ENCODE measurements at regions of chr2 and their contacts with region 1.

Region 1: GRCh38 chr2:109545828-109546713 is 67.7 kb downstream of the SEPTIN10 start:
- DNase-seq: peak; percentile 76
- ATAC-seq: peak; percentile 82
- H3K4me3 ChIP-seq: no peak overlapping the region
- H3K27ac ChIP-seq: no peak overlapping the region
- H3K4me1 ChIP-seq: no peaks in the 10 kb centered on the region
- H3K27me3 ChIP-seq: no peaks in the 10 kb centered on the region
- CTCF ChIP-seq: peak; percentile 92

Region 2: DNA sequence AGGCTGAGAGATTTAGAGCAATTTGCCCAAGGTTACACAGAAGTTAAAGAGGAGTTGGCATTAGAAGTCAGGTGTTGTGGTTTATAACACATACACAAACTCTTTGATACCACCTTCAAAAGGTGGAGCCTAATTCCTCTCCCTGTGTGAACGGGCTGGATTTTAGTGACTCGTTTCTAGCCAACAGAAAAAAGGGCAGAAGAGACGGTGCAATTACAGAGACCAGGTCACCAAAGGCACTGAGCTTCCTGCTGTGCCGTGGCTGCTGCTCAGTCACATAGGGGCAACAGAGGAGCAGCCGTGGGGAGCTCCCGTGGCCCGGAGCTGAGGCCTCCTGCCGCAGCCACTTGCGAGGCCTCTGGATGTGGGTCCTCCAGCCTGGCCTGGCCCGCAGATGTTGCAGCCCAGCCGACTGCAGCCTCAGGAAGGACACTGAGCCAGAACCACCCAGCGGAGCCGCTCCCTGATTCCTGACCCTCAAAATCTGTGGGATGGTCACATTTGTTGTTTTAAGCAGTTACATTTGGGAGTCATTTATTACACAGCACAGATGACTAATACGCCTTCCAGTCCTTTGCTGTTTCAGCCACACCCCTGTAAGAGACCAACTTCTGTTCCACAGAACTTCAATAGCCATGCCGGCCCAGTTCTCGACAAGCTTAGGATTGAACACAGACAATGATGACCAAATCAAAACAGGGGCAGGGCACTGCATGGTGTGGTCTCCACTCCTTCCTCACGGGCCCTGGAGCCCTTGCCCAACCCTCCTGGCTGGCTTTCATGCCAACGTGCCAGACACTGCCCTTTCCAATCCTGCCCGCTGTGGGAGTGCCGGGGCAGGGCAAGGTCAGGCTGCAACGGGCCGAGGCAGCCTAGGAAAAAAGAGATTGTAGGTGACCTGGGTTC is 574.2 kb before region 1 on chr2:
- CTCF ChIA-PET with region 1: no interaction called
- POLR2A ChIA-PET with region 1: no interaction called
- intact Hi-C with region 1: no loop called
- DNase-seq: peak; percentile 91
- ATAC-seq: peak; percentile 87
- H3K4me3 ChIP-seq: peak overlapping the region; percentile 43; the same call in 1 of the 2 replicates
- H3K27ac ChIP-seq: peak overlapping the region; percentile 94
- H3K4me1 ChIP-seq: peaks cover 43% of the 10 kb centered on the region
- H3K27me3 ChIP-seq: no peaks in the 10 kb centered on the region
- CTCF ChIP-seq: no peak

Region 3: DNA sequence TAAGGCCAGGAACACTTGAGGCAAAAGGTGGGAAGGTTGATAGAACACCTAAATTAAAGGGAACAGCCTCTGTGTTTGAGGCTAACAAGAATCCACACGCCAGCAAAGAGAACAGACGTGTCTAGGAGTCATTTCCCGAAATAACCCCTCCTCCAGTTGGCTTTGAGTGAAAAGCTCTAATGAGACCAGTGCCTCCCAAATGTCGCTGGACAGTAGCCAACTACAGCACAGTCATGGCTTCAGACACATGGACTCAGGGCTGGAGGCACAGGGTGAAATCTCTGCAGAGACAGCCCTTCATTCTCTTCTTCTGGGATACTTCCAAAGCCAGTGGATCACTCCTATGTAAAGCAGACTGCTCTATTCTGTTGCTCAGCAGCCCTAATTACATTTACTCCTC is 117.7 kb after region 1 on chr2:
- CTCF ChIA-PET with region 1: interaction called, 20 read pairs
- POLR2A ChIA-PET with region 1: no interaction called
- intact Hi-C with region 1: loop called (anchors 1 kb)
- DNase-seq: peak; percentile 46
- ATAC-seq: no peak
- H3K4me3 ChIP-seq: no peak overlapping the region
- H3K27ac ChIP-seq: no peak overlapping the region
- H3K4me1 ChIP-seq: no peaks in the 10 kb centered on the region
- H3K27me3 ChIP-seq: peaks cover 9% of the 10 kb centered on the region; the same call in 1 of the 2 replicates
- CTCF ChIP-seq: no peak

Region 4: GRCh38 chr2:109715313-109715805 is 169.3 kb after region 1 on chr2:
- CTCF ChIA-PET with region 1: interaction called, 6 read pairs
- POLR2A ChIA-PET with region 1: no interaction called
- intact Hi-C with region 1: loop called (anchors 1 kb)
- DNase-seq: peak; percentile 63
- ATAC-seq: peak; percentile 91
- H3K4me3 ChIP-seq: no peak overlapping the region
- H3K27ac ChIP-seq: no peak overlapping the region
- H3K4me1 ChIP-seq: peaks cover 7% of the 10 kb centered on the region; the same call in 1 of the 2 replicates
- H3K27me3 ChIP-seq: no peaks in the 10 kb centered on the region
- CTCF ChIP-seq: peak; percentile 69

Region 5: DNA sequence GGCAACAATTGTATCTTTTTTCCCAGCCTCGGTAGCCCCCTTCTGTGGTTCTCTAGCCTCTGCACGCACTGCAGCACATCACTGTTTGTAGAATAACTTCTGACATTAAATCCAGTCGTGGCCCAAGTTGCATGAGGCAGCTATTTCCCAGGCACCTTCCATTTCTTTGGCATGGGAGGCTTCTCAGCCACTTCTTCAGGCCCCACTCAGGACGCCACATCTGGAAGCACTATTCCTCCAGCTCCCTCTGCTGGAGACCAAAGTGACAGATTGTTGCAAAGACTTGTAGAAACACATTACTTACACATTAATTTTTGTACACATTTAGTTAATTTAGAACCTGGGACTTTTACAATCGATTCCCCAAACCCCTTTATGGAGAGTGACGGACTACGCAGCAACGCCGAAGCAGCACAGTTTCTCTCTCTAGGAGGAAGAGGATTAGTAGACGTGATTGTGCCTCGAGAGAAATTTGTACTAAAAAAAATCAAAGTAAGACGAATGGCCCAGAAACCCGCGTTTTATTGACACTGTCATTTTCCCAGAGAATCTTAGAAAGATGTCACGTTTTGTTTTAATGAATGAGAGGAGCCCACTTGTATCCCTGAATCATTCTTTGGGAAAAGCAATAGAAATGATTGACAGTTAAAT is 190.2 kb after region 1 on chr2:
- CTCF ChIA-PET with region 1: interaction called, 4 read pairs
- POLR2A ChIA-PET with region 1: no interaction called
- intact Hi-C with region 1: loop called (anchors 1 kb)
- DNase-seq: peak; percentile 77
- ATAC-seq: peak; percentile 86
- H3K4me3 ChIP-seq: no peak overlapping the region; the same call in 1 of the 2 replicates
- H3K27ac ChIP-seq: no peak overlapping the region
- H3K4me1 ChIP-seq: no peaks in the 10 kb centered on the region
- H3K27me3 ChIP-seq: no peaks in the 10 kb centered on the region
- CTCF ChIP-seq: peak; percentile 84

Measured in PC-3 (cell line).